Mammary epithelial cell (primary cell): ENCODE measurements at regions of chr6 and their contacts with region 1.

Region 1: DNA sequence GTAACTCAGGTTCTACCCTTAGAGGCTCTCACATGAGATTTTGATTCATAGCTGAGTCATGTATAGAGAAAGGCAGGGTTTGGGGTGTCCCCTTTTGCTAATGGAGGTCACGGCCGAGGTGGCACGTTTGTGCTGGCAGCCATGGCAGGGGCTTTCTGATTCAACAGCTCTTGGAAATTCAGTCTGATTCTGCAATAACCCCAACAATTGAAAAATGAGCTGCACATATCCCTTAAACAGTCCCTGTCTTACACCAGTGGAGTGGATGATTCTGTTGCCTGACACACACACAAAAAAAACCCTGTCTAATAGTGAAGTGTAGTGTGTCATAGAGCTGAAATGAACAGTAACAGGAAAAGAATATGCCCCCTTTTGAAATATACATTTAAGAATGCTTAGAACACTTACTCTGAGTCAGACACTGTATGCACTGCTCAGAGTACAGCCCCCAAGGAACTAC is 40.4 kb upstream of the ARG1 start:
- DNase-seq: peak; percentile 37
- H3K4me3 ChIP-seq: no peak overlapping the region
- H3K27ac ChIP-seq: no peak overlapping the region
- H3K4me1 ChIP-seq: no peaks in the 10 kb centered on the region
- H3K27me3 ChIP-seq: no peaks in the 10 kb centered on the region
- CTCF ChIP-seq: no peak

Region 2: GRCh38 chr6:131116749-131117360 is 415.8 kb before region 1 on chr6:
- CTCF ChIA-PET with region 1: no interaction called
- dilution Hi-C with region 1: no loop called
- in situ Hi-C with region 1: no loop called
- intact Hi-C with region 1: loop called (anchors 2 kb)
- DNase-seq: peak; percentile 37
- H3K4me3 ChIP-seq: no peak overlapping the region
- H3K27ac ChIP-seq: no peak overlapping the region
- H3K4me1 ChIP-seq: no peaks in the 10 kb centered on the region
- H3K27me3 ChIP-seq: no peaks in the 10 kb centered on the region
- CTCF ChIP-seq: peak; percentile 42 to 53

Region 3: DNA sequence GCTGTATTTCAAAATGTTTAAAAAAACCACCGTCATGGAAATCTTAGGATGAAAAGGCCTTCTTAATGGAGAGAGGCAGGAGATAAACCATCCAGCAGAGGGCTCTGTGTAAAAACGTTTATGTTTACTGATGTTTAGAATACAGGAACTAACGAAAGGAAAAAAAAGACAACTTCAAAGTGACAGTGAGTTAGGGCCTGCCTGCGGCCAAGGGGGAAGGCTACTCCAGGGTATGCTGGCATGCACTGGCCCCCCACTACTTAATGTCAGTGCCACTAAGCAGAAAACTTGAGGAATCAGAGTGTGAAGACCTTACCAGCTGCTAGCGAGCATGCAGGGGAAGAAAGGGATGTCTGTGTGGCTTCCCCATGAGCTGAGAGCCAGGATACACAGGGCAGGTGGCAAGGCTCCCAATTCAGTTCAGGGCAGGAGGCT is 349.6 kb before region 1 on chr6:
- CTCF ChIA-PET with region 1: no interaction called
- dilution Hi-C with region 1: no loop called
- in situ Hi-C with region 1: loop called (anchors 10 to 25 kb)
- intact Hi-C with region 1: loop called (anchors 5 kb)
- DNase-seq: no peak
- H3K4me3 ChIP-seq: no peak overlapping the region
- H3K27ac ChIP-seq: no peak overlapping the region
- H3K4me1 ChIP-seq: no peaks in the 10 kb centered on the region
- H3K27me3 ChIP-seq: no peaks in the 10 kb centered on the region
- CTCF ChIP-seq: peak; percentile 22 to 44

Region 4: DNA sequence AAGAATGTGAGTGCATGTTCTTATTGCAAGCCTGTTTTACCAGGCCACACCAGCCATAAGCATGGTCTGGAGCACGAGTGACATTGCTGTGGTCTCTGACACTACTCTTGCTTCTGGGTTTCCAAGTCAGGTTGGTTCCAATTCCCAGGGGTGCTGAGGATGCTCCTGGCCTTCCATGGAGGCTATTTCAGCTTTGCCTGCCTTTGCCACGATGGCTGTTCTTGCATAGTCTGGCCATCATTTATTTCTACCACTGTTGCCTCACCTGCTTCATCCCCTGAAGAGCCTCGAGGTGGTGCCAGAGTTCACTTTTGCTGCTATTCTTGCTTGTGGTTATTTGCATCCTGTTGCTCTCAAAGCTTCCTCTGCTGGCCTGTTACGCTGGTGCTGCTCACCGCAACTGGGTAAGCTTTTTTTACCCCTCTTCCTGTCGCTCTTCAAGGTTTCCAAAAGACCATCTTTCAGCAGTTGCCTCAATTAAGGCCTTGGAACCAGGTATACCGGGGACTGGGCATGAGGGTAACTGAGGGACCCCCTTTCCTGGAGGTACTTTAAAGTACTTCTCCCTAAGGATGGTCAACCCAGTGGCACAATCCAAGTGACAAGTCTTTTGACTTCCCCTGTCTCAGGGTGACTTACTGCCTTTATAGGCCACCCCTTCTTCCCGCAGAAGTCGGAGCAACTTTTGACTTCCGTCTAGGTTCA is 332.9 kb before region 1 on chr6:
- CTCF ChIA-PET with region 1: no interaction called
- dilution Hi-C with region 1: no loop called
- in situ Hi-C with region 1: loop called in 1 of 2 experiments (anchors 25 kb)
- intact Hi-C with region 1: loop called (anchors 1 kb)
- DNase-seq: peak; percentile 55
- H3K4me3 ChIP-seq: no peak overlapping the region
- H3K27ac ChIP-seq: no peak overlapping the region
- H3K4me1 ChIP-seq: no peaks in the 10 kb centered on the region
- H3K27me3 ChIP-seq: no peaks in the 10 kb centered on the region
- CTCF ChIP-seq: peak; percentile 50 to 70